A673 (cell line): ENCODE measurements at regions of chr19 and their contacts with region 1.

Region 1: DNA sequence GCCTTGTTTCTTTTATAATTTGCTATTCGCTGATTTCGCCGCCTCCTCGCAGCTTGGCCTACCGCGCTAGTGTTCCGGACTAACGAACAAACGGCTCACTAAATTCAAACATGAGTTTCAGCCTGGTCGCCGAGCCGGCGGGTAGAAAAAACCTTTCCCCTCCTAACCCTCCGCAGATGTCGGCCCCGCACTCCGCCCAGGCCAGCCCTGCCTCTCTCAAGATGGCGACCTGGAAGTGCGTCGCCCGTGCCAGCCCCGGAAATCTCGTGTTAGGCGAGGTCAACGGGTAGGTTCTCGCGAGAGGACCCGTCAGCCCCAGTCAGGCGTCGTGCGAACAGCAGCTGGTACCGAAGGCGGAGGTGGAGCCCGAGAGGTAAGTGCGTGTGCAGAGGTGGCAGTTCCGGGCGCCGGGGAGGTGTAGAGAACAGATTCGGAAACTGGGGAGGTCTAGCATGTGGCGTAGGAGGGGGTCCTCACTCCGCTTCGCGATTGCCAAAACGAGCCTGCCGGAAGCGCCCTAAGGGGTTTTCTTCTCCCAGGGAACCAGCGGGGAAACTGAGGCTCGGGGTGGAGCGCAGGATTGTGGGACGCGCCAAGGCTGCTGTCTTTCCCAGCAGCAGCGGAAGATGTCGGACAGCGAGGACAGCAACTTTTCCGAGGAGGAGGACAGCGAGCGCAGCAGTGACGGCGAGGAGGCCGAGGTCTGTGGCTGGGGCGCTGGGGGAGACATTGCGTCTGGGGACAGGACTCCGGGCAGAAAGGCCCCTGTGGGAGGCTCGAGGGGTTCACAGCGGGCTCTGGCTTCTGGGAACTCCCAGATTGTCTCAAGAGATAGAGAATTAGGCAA is at the start of gene SUPT5H:
- DNase-seq: peak; percentile 98
- H3K4me3 ChIP-seq: peak within 1 kb of the TSS; percentile 98
- H3K27ac ChIP-seq: peak within 1 kb of the TSS; percentile 88
- H3K4me1 ChIP-seq: peaks cover 10% of the 10 kb centered on the region
- H3K27me3 ChIP-seq: no peaks in the 10 kb centered on the region
- CTCF ChIP-seq: no peak
- total RNA-seq, gene SUPT5H: 160 and 169 TPM in 2 replicates

Region 2: GRCh38 chr19:38737921-38738729 is 707.4 kb before region 1 on chr19:
- CTCF ChIA-PET with region 1: no interaction called
- POLR2A ChIA-PET with region 1: interaction called, 13 read pairs
- intact Hi-C with region 1: no loop called
- DNase-seq: no peak
- H3K4me3 ChIP-seq: no peak overlapping the region
- H3K27ac ChIP-seq: no peak overlapping the region
- H3K4me1 ChIP-seq: peaks cover 8% of the 10 kb centered on the region
- H3K27me3 ChIP-seq: no peaks in the 10 kb centered on the region
- CTCF ChIP-seq: no peak

Region 3: DNA sequence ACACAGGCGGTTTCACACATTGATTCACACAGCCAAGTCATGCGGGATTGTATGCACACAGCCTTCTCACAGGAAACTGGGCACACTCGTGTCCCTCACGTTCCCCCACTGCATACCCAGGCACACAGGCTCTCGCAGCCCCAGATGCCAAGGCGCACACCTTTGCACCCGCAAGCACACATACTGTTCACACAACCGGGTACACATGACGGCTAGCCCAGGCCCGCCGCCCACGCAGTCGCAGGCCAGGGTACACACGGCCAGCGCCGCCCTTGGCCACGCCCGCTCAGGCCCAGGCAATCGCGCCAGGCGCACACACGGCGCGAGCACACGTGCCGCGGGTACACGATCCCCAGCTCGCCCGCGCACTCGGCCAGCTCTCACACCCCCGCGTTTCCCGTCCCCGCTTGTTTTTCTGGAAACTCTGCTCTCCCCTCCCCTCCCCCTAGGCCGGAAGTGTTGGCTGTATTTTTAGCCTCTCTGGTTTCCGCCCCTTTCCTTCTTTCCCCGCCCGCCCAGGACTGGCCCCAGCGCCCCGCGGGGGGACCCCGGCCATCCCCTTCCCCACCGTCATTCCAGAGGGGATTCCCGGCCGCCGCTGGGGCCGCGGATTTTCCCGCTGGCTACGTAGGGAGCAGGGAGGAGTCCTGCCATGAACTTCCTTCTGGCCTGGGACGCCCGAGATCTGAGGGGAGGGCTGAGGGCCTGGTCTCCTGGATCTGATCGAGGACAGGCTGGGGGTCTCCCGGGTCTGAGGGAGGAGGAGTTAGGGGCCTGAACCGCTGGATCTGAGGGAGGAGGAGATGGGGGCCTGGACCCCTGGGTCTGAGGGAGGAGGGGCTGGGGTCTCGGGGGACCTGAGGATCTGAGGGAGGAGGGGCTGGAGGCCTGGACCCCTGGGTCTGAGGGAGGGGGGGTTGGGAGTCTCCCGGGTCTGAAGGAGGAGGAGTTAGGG is 42.9 kb before region 1 on chr19:
- CTCF ChIA-PET with region 1: no interaction called
- POLR2A ChIA-PET with region 1: no interaction called
- intact Hi-C with region 1: no loop called
- DNase-seq: peak; percentile 91
- H3K4me3 ChIP-seq: peak overlapping the region; percentile 50
- H3K27ac ChIP-seq: peak overlapping the region; percentile 98
- H3K4me1 ChIP-seq: peaks cover 27% of the 10 kb centered on the region
- H3K27me3 ChIP-seq: no peaks in the 10 kb centered on the region
- CTCF ChIP-seq: no peak

Region 4: GRCh38 chr19:39532233-39533002 is 86.9 kb after region 1 on chr19 and contains the start of gene EID2B:
- CTCF ChIA-PET with region 1: interaction called, 8 read pairs
- POLR2A ChIA-PET with region 1: no interaction called
- intact Hi-C with region 1: loop called (anchors 2 kb)
- DNase-seq: peak; percentile 97
- H3K4me3 ChIP-seq: peak within 1 kb of the TSS; percentile 81
- H3K27ac ChIP-seq: peak within 1 kb of the TSS; percentile 60
- H3K4me1 ChIP-seq: peaks cover 10% of the 10 kb centered on the region
- H3K27me3 ChIP-seq: no peaks in the 10 kb centered on the region
- CTCF ChIP-seq: peak; percentile 94
- total RNA-seq, gene EID2B: 3.4 and 4.2 TPM in 2 replicates

Region 5: DNA sequence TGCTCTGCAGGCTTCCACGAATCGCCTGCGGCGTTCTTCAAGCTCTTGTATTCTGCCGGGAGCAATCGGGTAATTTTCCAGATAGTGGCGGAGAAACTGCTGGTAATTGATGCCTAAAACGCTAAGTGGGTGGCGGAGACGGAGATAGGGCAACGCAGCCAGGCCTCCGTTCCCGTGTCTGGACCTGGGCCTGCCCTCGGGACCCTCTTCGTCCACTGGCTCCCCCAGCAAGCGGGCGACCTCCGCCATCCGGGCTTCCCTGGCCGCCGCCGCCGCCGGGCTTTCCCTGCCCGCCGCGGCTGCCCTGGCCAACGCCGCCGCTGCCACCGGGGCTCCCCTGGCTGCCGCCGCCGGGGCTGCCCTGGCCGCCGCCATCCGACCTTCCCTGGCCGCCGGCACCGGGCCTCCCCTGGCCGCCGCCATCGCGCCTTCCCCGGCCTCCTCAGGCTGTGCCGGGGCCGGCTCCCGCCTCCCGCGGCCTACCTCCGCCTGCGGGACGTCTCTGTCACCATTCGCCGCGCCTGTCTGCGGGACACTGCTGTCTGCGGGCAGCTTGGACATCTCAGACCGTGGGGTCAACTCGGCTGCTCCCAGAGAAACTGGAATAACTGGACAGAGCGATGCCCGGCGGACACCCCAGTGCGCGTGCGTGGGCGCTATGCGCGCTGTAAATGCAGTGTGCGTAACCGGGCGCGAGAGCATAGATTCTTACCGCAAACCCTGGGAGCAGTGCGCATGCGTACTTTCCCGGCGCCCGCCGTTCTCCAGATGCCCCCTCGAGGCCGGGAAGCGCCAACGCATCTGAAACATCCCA is 94.2 kb after region 1 on chr19 and contains the start of gene EID2:
- CTCF ChIA-PET with region 1: interaction called, 4 read pairs
- POLR2A ChIA-PET with region 1: no interaction called
- intact Hi-C with region 1: loop called (anchors 2 kb)
- DNase-seq: peak; percentile 95
- H3K4me3 ChIP-seq: peak within 1 kb of the TSS; percentile 79
- H3K27ac ChIP-seq: peak within 1 kb of the TSS; percentile 86
- H3K4me1 ChIP-seq: peaks cover 10% of the 10 kb centered on the region
- H3K27me3 ChIP-seq: peaks cover under 1% of the 10 kb centered on the region
- CTCF ChIP-seq: peak; percentile 86; the same call in 1 of the 2 replicates
- total RNA-seq, gene EID2: 25.0 and 25.2 TPM in 2 replicates

Region 6: GRCh38 chr19:39671738-39672363 is 226.4 kb after region 1 on chr19:
- CTCF ChIA-PET with region 1: no interaction called
- POLR2A ChIA-PET with region 1: no interaction called
- intact Hi-C with region 1: loop called (anchors 2 kb)
- DNase-seq: peak; percentile 65
- H3K4me3 ChIP-seq: no peak overlapping the region
- H3K27ac ChIP-seq: no peak overlapping the region
- H3K4me1 ChIP-seq: no peaks in the 10 kb centered on the region
- H3K27me3 ChIP-seq: peaks cover 3% of the 10 kb centered on the region
- CTCF ChIP-seq: peak; percentile 65